HepG2 (cell line): ENCODE measurements at regions of chr6 and their contacts with region 1.

Region 1: DNA sequence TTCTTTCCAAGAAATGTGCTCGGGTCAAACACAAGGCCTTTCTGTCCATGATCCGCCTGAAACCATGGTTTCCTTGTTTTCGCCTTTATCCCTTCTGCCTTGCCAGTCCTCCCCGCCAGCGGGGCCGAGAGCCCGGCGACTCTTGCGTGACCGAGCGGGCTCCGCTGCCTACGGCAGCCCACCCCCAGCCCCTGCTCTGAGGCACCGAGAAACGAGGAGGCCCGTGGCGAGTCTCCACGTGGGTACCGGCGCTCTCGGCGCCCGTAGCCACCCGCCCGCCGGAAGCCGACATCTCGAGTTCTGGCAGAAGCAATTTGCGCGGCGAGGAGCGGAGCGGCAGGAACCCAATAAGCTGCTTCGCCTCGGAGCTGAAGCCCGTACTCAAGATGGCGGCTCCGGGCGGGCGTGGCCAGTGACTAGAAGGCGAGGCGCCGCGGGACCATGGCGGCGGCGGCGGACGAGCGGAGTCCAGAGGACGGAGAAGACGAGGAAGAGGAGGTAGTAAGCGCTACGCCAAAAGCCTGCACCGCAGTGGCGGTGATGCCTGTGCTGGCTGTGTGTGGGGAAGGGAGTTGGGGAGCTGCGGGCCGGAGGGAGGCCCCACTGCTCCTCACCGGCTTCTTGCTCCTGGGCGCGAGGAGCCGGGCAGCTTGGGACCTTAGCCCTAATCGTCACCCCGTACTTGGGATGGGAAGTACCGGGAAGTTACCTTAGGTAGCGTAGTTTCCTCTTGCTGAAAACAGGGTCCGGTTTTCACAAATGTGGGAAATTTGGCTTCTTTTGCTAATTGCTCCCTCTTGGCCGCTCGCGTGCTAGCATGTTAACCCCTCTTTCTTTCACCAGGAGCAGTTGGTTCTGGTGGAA is at the start of gene GTF3C6:
- DNase-seq: peak; percentile 82
- ATAC-seq: peak; percentile 99
- H3K4me3 ChIP-seq: peak within 1 kb of the TSS; percentile 80 to 93 (median 91)
- H3K27ac ChIP-seq: peak within 1 kb of the TSS; percentile 92
- H3K4me1 ChIP-seq: peaks cover 36% of the 10 kb centered on the region
- H3K27me3 ChIP-seq: no peaks in the 10 kb centered on the region
- CTCF ChIP-seq: 0 out of 2 replicates have a peak, but pooled peaks have one; percentile 5
- EP300 ChIP-seq: 0 out of 4 replicates have a peak, but pooled peaks of 1 of the 2 experiments have one; percentile 20
- POLR2A ChIP-seq: peak; percentile 89 to 90
- RAD21 ChIP-seq: peak; percentile 45; the same call in 1 of the 2 replicates
- total RNA-seq, gene GTF3C6: 160 and 195 TPM in 2 replicates

Region 2: GRCh38 chr6:110971468-110971867 is 12.9 kb after region 1 on chr6:
- CTCF ChIA-PET with region 1: no interaction called
- POLR2A ChIA-PET with region 1: interaction called, 24 read pairs
- in situ Hi-C with region 1: no loop called
- intact Hi-C with region 1: no loop called
- DNase-seq: no peak
- ATAC-seq: no peak
- H3K4me3 ChIP-seq: no peak overlapping the region
- H3K27ac ChIP-seq: no peak overlapping the region
- H3K4me1 ChIP-seq: peaks cover 21% of the 10 kb centered on the region
- H3K27me3 ChIP-seq: no peaks in the 10 kb centered on the region
- CTCF ChIP-seq: no peak
- EP300 ChIP-seq: no peak
- POLR2A ChIP-seq: no peak
- RAD21 ChIP-seq: no peak

Region 3: DNA sequence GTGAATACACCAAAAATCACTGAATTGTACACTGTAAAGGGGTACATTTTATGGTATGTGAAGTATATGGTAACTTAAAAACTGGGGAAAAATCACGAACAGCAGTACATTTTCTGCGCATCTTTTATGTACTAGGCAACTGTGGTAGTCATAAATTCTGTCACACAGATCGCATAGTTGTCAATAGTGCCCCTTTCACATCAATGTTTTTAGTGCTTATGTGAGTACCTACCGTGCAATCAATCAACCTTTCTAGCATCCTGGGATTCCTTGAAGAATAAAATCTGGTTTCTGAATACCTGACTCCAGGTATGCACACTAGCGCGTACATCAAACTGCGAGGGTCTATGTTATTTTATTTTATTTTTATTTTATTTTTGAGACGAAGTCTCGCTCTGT is 22.6 kb after region 1 on chr6:
- CTCF ChIA-PET with region 1: no interaction called
- POLR2A ChIA-PET with region 1: interaction called, 24 read pairs
- in situ Hi-C with region 1: no loop called
- intact Hi-C with region 1: loop called (anchors 1 kb)
- DNase-seq: no peak
- ATAC-seq: no peak
- H3K4me3 ChIP-seq: peak overlapping the region; percentile 74 to 85 (median 82)
- H3K27ac ChIP-seq: peak overlapping the region; percentile 86
- H3K4me1 ChIP-seq: peaks cover 44% of the 10 kb centered on the region
- H3K27me3 ChIP-seq: no peaks in the 10 kb centered on the region; a peak in 1 of 5 replicates
- CTCF ChIP-seq: no peak
- EP300 ChIP-seq: no peak
- POLR2A ChIP-seq: no peak
- RAD21 ChIP-seq: no peak